KBM-7 (cell line): ENCODE measurements at regions of chr16 and their contacts with region 1.

Region 1: DNA sequence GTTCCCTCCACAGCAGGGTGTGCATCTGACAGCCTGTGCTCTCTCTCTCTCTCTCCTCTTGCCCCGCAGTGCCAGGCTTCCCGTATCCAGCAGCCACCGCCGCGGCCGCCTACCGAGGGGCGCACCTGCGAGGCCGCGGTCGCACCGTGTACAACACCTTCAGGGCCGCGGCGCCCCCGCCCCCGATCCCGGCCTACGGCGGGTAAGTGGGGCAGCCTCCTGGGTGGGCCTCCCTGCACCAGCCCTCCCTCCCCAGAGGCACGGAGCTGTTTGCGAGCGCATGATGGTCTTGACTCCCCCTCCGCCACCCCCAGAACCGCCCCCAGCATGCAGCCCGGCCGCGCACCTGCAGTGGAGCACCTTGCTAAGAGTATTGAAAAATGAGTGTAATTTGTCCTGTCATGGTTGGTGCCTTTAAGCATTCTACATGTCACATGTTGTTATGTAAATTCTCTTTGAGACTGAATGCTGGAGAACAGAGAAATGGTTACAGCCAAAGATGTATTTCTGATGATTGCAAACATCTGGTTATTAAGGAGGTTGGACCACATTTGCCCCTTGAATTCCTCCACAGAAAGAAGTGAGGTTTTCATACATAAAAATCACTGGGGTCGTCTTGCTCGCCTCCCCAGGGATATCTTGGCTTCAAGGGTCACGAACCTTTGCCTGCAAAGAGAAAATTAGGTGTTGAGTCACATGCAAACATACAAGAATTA is 321.3 kb downstream of the RBFOX1 start:
- DNase-seq: no peak

Region 2: DNA sequence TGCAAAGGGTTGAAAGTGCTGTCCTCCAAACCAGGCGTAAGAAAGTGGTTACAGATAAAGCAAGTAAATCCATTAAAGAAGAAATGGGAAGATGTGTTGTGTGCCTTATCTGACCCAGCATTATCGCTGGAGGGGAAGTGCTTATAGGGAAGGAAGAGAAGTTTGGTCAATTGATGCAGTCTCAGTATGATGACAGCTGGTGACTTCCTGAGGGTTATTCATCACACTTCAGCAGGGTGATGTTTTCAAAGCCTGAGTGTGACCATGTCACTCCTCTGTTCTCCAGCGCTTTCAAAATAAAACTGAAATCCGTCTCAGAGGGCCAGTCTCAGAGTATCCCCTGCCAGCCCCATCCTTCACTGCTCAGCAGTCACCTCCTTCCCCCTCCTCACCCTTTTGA is 826.6 kb before region 1 on chr16:
- in situ Hi-C with region 1: no loop called
- DNase-seq: peak; percentile 45

Region 3: DNA sequence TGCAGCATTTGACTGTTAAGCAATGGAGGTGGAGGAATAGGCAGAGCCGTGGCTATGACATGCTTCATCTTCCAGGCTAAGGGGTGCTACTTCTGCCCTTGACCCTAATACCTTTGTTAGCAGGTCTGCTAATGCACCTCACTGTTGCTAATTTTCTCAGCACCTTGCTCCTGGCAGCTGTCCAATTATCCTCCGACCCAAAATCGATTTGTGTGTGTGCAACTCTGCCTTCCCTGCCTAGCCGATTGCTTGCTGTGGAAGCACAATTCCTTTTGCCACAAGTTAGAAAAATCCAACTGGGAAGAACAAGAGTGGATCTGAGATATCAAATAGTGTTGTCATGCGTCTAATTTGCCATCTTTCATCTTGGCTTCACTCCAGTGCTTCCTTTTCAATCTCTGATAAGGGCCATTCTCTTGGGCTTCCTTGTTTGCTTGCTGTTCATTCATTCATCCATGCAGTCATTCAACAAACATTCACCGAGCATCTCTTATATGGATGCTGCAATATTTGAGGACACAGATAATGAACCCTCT is 101.5 kb after region 1 on chr16:
- in situ Hi-C with region 1: loop called (anchors 25 kb)
- DNase-seq: no peak